Activated CD4-positive, alpha-beta T cell treated with anti-CD3 and anti-CD28 coated beads, Interleukin-2, amount 10 ng/mL, durations not matched to agents 7 days and 5 days (primary cell): ENCODE measurements at regions of chr10 and their contacts with region 1.

Region 1: DNA sequence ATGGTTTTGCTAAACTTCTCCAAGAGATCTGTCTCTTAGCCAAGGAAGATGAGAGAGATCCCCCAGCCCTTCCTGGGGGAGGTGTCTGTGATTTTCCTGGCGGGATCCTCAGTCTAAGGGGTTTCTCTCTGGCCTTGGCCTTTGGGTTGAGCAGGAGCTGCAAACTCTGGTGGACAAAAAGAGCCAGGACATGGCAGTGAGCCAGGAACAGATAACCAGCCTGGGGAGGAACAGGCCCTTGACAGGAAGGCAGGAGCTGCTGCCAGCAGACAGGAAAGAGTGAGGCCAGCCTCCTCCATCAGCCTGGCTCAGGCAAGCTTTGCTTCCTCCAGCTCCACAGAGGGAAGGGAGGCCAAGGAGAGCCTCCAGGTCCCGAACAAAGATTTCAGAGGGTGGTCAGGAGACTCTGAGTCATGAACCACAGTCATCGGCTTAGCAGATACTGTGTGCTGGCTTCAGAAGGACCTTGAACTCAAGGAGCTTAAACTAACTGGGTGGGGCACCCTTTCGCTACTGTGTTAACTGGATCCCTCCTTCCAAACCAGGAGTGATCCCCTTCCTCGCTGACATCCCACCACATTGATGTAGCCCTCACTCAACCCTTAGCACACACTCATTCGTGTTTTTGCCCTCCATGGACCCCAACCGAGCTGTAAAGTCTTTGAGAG is 34.7 kb downstream of the DDIT4 start:
- DNase-seq: peak; percentile 40
- H3K4me3 Mint-ChIP-seq: no peak overlapping the region
- H3K27ac Mint-ChIP-seq: peak overlapping the region; percentile 77
- H3K4me1 Mint-ChIP-seq: peaks cover 73% of the 10 kb centered on the region
- H3K27me3 Mint-ChIP-seq: no peaks in the 10 kb centered on the region

Region 2: DNA sequence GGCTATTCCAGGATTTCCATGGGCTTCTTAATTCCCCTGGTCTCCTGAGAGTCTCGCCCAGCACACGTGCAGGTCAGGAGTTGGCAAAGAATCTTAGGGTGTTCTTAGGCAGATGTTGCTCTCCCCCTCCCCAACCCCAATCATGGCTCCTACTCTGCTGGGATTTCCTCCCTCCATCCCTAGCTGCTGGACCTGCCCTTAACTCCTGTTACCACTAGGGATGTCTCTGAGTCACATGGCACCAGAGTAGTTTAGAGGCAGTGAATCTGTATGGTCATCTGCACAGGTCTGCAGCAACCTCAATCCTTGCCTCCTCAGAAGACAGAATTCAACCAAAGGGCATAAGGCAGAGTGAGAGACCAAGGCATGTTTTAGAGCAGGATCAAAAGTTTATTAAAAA is 396.0 kb before region 1 on chr10:
- CTCF ChIA-PET with region 1: no interaction called
- POLR2A ChIA-PET with region 1: no interaction called
- DNase-seq: no peak
- H3K4me3 Mint-ChIP-seq: no peak overlapping the region
- H3K27ac Mint-ChIP-seq: no peak overlapping the region
- H3K4me1 Mint-ChIP-seq: peaks cover 8% of the 10 kb centered on the region
- H3K27me3 Mint-ChIP-seq: no peaks in the 10 kb centered on the region

Region 3: DNA sequence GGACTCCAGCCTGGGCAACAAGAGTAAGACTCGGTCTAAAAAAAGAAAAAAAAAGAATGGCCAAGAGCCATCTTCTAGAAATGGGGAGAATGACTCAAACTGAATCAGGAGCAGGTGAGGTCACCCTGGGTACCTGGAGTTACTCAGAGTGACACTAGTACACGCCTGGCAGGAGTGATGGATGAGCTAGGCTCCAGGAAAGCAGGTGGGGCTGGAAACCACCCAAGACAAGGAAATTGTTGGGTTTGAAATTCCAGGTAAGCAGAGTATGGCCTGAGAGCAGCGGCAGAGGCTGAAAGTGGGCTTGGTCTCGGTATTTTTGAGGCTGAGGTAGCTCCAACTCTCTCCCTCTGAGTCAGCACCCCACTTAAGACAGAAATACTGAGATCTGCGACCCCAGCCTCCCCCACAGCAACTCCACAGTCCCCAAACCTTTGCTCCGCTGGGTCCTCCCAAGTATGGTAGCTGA is 16.2 kb before region 1 on chr10:
- CTCF ChIA-PET with region 1: interaction called, 21 read pairs
- POLR2A ChIA-PET with region 1: no interaction called
- DNase-seq: peak; percentile 29
- H3K4me3 Mint-ChIP-seq: peak overlapping the region; percentile 11
- H3K27ac Mint-ChIP-seq: peak overlapping the region; percentile 84
- H3K4me1 Mint-ChIP-seq: peaks cover 67% of the 10 kb centered on the region
- H3K27me3 Mint-ChIP-seq: no peaks in the 10 kb centered on the region

Region 4: GRCh38 chr10:72319416-72320254 is 11.2 kb after region 1 on chr10:
- CTCF ChIA-PET with region 1: interaction called, 19 read pairs
- POLR2A ChIA-PET with region 1: interaction called, 3 read pairs
- DNase-seq: peak; percentile 89
- H3K4me3 Mint-ChIP-seq: peak overlapping the region; percentile 69
- H3K27ac Mint-ChIP-seq: peak overlapping the region; percentile 95
- H3K4me1 Mint-ChIP-seq: peaks cover 83% of the 10 kb centered on the region
- H3K27me3 Mint-ChIP-seq: no peaks in the 10 kb centered on the region